PC-9 (cell line): ENCODE measurements at regions of chr1 and their contacts with region 1.

Region 1: DNA sequence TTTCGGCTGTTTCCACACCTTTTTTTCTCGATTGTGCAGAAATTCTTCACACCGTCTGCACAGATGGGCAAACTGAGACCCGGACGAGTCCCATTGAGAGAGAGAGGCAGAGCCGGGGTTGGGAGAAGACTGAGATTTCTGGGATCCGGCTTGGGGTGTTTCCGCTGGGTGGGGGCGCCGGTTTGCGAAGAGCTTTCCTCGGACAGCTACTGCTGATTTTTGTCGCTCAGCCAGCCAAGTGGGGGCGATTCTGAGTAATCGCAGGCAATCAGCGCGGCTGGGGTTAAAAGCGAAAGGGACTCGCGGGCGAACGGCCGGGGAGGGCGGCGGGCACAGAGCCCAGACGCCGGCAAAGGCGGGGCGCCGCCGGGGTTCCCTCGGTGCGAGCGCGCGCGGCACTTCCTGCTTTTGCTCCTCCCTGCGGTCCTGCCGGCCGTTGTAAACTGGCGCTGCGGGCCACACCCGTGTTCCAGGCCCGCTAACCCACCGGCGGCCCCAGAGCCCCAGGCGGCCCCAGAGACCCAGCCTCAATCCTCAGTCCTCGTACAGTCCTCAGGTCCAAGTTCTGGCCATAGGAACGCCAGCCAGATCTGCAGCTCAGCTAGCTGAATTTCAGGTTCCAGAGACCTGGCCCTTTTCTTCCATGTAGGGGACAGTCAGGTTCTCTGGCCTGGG is 32.4 kb upstream of the JUN start:
- DNase-seq: peak; percentile 76 to 93
- H3K4me3 ChIP-seq: peak overlapping the region; percentile 83
- H3K27ac ChIP-seq: peak overlapping the region; percentile 99
- H3K4me1 ChIP-seq: peaks cover 63% of the 10 kb centered on the region
- H3K27me3 ChIP-seq: no peaks in the 10 kb centered on the region
- CTCF ChIP-seq: no peak

Region 2: DNA sequence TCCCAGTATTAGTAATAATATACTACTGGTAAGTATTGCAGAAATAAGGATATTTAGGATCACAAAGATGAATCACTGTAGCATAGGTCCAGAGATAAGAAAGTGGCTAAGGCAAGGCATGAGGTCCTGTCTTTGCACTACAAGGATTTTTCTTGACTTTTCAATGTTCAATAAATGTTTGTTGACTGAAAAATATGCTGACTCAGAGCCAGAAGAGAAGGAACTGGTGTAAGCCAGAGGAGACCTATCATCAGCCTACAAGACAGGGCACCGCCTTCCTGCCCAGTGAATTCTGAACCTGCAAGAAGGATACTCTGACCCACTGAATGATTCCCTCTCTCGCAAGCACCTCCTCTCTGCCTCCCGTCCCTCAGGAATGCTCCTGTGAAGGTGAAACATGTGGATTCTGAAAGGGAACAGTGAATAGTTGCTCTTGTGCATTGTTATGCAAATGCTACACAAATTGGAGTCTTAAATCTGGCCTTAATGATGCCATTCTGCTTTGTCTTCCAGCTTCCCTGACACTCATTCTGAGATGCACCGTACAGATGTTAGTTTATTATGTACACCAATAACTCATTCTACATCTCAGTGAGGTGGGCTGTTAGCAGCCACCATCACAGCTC is 809.7 kb before region 1 on chr1:
- CTCF ChIA-PET with region 1: no interaction called
- POLR2A ChIA-PET with region 1: no interaction called
- intact Hi-C with region 1: no loop called
- DNase-seq: no peak
- H3K4me3 ChIP-seq: no peak overlapping the region
- H3K27ac ChIP-seq: no peak overlapping the region
- H3K4me1 ChIP-seq: no peaks in the 10 kb centered on the region
- H3K27me3 ChIP-seq: peaks cover 4% of the 10 kb centered on the region; the same call in 1 of the 2 replicates
- CTCF ChIP-seq: no peak

Region 3: GRCh38 chr1:58592529-58593134 is 223.6 kb before region 1 on chr1:
- CTCF ChIA-PET with region 1: no interaction called
- POLR2A ChIA-PET with region 1: interaction called, 15 read pairs
- intact Hi-C with region 1: no loop called
- DNase-seq: peak; percentile 87 to 94
- H3K4me3 ChIP-seq: no peak overlapping the region
- H3K27ac ChIP-seq: peak overlapping the region; percentile 81
- H3K4me1 ChIP-seq: peaks cover 31% of the 10 kb centered on the region
- H3K27me3 ChIP-seq: no peaks in the 10 kb centered on the region
- CTCF ChIP-seq: no peak

Region 4: DNA sequence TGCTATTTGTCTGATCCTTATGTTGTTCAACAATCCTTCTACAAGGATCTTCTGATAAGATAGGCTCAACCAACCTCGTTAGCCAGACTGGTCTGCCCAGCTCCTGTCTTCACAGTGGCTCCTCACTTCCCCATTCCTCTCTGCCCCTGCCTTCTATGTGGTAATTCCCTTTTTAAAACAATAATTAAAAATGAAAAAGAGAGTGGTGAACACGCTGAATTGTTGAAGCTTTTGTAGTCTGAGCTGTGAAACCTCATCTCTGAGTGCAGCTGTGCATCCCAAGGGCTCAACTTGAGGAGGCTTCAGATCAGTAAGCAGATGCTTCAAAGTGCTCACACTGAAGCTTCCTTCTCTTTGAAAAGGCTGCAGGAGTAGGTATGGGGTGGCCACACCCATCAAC is 38.4 kb after region 1 on chr1:
- CTCF ChIA-PET with region 1: no interaction called
- POLR2A ChIA-PET with region 1: no interaction called
- intact Hi-C with region 1: no loop called
- DNase-seq: peak; percentile 27 to 56
- H3K4me3 ChIP-seq: no peak overlapping the region
- H3K27ac ChIP-seq: no peak overlapping the region
- H3K4me1 ChIP-seq: peaks cover 34% of the 10 kb centered on the region
- H3K27me3 ChIP-seq: no peaks in the 10 kb centered on the region
- CTCF ChIP-seq: no peak

Region 5: GRCh38 chr1:58874757-58875755 is 58.8 kb after region 1 on chr1:
- CTCF ChIA-PET with region 1: no interaction called
- POLR2A ChIA-PET with region 1: interaction called, 5 read pairs
- intact Hi-C with region 1: loop called (anchors 1 kb)
- DNase-seq: peak; percentile 84 to 98
- H3K4me3 ChIP-seq: no peak overlapping the region; the same call in 1 of the 2 replicates
- H3K27ac ChIP-seq: peak overlapping the region; percentile 92
- H3K4me1 ChIP-seq: peaks cover 48% of the 10 kb centered on the region
- H3K27me3 ChIP-seq: no peaks in the 10 kb centered on the region
- CTCF ChIP-seq: no peak

Region 6: DNA sequence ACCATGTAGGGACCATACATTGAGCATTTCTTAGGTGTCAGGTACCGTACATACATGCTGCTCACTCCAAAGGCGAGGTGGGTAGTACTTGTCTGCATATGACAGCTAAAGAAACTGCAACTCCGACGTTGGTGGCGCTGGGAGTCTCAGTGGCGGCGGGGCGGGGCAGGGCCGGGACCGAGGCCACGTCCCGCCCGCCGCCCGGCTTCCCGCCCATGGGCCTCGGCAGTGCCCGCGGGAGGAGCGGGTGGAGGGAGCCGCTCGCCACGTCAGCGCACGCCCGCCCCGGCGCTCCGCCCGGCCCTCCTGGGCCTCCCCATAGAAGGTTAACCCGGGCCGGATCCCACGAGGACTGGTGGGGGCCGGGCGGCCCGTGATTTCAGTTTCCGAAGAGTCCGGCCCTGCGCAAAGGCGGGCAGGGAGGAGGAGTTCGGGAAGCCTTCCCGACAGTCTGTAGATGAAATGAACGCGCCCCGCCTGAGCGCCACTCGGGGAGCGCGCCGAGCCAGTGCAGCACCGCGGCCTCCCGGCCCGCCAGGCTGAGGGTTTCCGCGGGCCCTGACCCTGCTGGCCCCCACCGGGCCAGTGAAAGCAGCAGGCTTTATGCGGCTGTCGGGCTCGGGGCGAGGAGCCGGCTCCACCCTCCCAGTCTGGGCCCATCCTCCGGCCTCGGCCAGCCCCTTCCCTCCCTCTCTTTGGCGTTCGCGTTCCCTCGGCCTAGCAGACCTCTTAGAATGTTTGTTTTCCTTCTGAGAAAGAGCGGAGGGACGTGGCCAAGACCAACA is 87.5 kb after region 1 on chr1:
- CTCF ChIA-PET with region 1: no interaction called
- POLR2A ChIA-PET with region 1: interaction called, 4 read pairs
- intact Hi-C with region 1: loop called (anchors 1 kb)
- DNase-seq: peak; percentile 81 to 94
- H3K4me3 ChIP-seq: peak overlapping the region; percentile 63
- H3K27ac ChIP-seq: peak overlapping the region; percentile 90
- H3K4me1 ChIP-seq: peaks cover 69% of the 10 kb centered on the region
- H3K27me3 ChIP-seq: no peaks in the 10 kb centered on the region
- CTCF ChIP-seq: no peak

Region 7: DNA sequence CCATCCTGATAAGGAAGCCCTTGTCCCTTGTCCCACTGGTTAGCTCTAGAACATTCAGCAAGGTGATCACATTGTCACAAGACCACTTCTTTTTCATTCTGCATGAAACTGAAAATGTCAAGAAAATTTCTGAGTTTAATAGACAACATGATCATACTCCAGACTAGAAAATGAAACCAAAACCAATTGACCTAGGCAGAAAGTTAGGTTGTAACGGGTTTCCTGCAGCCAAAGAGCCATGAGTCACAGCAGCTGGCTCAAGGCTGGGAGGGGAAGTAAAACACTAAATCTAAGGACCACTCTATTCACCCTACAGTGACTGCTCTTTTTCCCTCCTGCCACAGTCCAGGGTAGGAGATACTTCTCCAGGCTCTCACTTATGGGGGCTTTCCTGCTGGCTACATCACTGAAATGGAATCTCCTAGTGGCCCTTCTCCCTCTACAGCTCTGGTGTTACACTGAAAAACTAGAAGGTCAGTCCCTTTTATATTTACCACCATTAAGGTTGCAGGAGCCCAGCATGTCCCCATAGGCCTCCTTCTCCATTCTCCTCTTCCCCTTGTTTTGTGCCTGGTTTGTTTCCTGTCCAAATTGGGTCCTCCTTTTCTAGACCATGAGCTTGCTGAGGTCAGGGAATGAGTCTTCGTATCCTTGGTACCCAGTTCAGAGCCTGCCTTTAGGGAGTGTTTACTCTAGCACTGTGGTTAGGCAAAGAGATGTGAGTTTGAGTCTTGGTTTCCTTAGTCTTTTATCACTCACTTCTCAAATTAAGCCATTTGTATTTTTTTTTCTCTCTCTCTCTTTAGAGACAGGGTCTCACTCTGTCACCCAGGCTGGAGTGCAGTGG is 204.2 kb after region 1 on chr1:
- CTCF ChIA-PET with region 1: no interaction called
- POLR2A ChIA-PET with region 1: no interaction called
- intact Hi-C with region 1: loop called (anchors 10 kb)
- DNase-seq: peak; percentile 20 to 49
- H3K4me3 ChIP-seq: no peak overlapping the region
- H3K27ac ChIP-seq: no peak overlapping the region
- H3K4me1 ChIP-seq: peaks cover 22% of the 10 kb centered on the region
- H3K27me3 ChIP-seq: no peaks in the 10 kb centered on the region
- CTCF ChIP-seq: no peak

Region 8: GRCh38 chr1:59699227-59699847 is 883.1 kb after region 1 on chr1:
- CTCF ChIA-PET with region 1: no interaction called
- POLR2A ChIA-PET with region 1: no interaction called
- intact Hi-C with region 1: loop called (anchors 1 kb)
- DNase-seq: peak in 1 of 2 experiments; percentile 8
- H3K4me3 ChIP-seq: no peak overlapping the region
- H3K27ac ChIP-seq: no peak overlapping the region
- H3K4me1 ChIP-seq: no peaks in the 10 kb centered on the region; the same call in 1 of the 2 replicates
- H3K27me3 ChIP-seq: no peaks in the 10 kb centered on the region
- CTCF ChIP-seq: peak; percentile 96